Upper lobe of right lung (tissue), 1 donor: ENCODE measurements at regions of chr4 and their contacts with region 1.

Region 1: GRCh38 chr4:165131247-165131832 is 18.7 kb upstream of the TMEM192 start:
- DNase-seq: no peak
- ATAC-seq: peak; percentile 91
- H3K4me3 ChIP-seq: no peak overlapping the region
- H3K27ac ChIP-seq: no peak overlapping the region
- H3K4me1 ChIP-seq: peaks cover 8% of the 10 kb centered on the region
- H3K27me3 ChIP-seq: no peaks in the 10 kb centered on the region
- CTCF ChIP-seq: peak; percentile 90

Region 2: GRCh38 chr4:164613792-164614191 is 517.5 kb before region 1 on chr4:
- intact Hi-C with region 1: no loop called
- DNase-seq: no peak
- ATAC-seq: no peak
- H3K4me3 ChIP-seq: no peak overlapping the region
- H3K27ac ChIP-seq: no peak overlapping the region
- H3K4me1 ChIP-seq: no peaks in the 10 kb centered on the region
- H3K27me3 ChIP-seq: no peaks in the 10 kb centered on the region
- CTCF ChIP-seq: no peak

Region 3: DNA sequence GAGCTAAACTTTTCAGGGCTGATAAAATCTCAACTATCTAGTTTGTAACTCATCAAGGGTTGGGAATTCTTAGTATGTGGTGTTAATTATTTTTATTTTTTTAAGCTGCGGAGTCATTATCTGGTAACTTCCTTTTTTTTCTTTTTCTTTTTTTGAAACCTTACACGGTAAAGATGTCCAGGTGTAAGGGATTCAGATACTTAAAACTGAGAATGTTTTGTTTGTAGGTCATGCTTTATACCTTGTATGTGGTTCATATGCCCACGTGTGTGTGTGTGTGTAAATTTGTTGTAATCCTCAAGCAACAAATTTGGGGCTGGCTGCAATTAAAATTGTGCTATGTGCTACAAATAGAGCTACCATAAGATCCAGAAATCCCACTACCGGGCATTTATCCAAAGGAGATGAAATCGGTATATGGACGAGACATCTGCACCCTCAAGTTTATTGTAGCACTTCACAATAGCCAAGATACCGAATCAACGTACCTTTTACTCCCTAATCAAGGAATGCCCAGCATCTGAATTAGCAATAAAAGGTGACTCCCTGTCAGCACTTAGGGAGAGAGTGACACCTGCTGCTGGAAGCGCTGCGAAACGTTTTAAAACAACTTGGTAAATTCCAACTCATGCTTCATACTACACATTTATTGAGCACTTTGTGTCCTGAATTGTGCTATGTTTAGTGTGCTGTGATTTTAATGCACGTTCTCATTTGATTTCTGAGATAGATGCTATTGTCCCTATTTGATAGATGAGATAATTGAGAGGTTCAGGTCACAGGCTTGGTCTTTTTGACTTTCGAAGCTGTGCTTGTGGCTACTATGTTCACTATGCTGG is 212.2 kb after region 1 on chr4:
- intact Hi-C with region 1: loop called (anchors 5 kb)
- DNase-seq: no peak
- ATAC-seq: no peak
- H3K4me3 ChIP-seq: no peak overlapping the region
- H3K27ac ChIP-seq: no peak overlapping the region
- H3K4me1 ChIP-seq: no peaks in the 10 kb centered on the region
- H3K27me3 ChIP-seq: no peaks in the 10 kb centered on the region
- CTCF ChIP-seq: peak; percentile 40